Astrocyte of the cerebellum (primary cell): ENCODE measurements at regions of chr11 and their contacts with region 1.

Region 1: GRCh38 chr11:108559340-108559739 is 34.2 kb downstream of the EXPH5 start:
- DNase-seq: peak; percentile 52
- H3K4me3 ChIP-seq: no peak overlapping the region
- CTCF ChIP-seq: no peak

Region 2: GRCh38 chr11:108593214-108593922 is 34.0 kb after region 1 on chr11 and contains the start of gene EXPH5:
- in situ Hi-C with region 1: loop called (anchors 5 kb)
- DNase-seq: peak; percentile 26
- H3K4me3 ChIP-seq: peak within 1 kb of the TSS; percentile 82
- CTCF ChIP-seq: peak; percentile 7

Region 3: DNA sequence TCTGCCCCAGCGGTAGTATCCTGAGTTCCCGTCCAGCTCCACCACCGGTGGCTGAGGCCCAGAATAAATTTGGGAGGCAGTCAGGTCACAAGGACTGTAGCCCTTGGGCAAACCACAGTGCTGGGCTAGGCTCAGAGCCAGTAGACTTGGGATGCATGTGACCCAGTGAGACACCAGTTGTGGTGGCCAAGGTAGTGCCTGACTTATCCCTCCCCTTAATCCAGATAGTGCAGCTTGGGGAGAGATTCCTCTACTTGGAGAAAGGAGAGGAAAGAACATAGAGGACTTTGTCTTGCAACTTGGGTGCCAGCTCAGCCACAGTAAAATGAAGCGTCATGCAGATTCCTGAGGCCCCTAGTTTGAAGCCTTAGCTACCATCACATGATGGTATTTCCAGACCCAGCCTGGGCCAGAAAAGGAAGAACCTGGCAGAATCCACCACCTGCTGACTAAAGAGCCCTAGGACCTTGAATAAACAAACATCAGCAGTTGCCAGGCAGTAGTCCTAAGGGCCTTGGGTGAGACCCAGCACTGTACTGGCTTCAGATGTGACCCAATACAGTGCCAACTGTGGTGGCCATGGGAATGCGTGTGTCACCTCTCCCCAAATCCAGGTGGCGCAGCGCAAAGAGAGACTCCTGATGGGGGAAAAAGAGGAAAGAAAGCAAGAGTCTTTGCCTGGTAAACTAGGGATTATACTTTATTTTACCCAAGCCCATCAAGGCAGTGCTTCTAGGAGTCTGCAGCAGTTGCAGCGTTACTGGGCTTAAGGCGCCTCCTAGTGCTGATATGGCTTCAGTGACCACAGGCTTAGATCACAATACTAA is 88.6 kb after region 1 on chr11:
- in situ Hi-C with region 1: no loop called
- DNase-seq: peak; percentile 76
- H3K4me3 ChIP-seq: no peak overlapping the region
- CTCF ChIP-seq: peak; percentile 92